AG04449 (cell line): ENCODE measurements at regions of chr17 and their contacts with region 1.

Region 1: DNA sequence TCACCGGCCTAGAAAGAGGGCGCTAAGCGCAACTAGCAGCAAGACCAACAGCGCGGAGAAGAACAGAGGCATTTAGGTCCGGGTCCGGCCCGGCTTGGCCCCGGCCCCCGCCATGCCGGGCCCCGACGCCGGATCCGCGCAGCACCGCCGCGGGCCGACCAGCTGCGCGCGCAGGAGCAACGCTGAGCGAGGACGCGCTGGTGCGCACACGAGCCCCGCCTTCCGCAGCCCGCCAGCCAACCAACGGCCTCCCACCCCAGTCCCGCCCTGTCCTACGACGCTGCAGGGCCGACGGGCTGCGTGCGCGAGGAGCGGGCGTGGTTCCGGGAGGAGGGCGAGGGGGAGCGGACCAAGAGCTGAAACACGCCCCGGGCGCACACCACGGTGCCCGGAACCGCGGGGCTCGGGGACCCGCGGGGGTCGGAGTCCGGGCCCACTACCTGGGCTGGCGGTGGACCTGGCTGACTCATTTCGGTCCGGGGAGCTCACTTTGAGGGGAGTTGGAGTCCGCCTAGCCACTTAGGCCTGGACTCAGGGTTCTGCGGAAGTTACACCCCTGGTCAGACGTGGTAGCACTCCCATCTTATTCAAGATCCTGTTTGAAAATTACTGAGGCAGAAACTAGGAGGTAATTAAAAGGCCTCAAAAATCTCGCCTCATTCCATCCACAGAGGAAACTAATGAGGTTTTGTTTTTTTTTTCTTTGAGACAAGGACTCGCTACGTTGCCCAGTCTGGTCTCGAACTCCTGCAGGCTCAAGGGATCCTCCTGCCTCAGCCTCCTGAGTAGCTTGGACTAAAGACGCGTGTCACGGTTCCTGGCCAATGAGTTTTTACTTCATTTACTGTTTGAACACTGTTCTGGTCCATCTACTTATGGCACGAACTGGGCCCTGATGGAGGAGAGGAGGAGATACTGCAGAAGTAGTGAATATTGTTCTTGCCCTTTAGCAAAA is at the start of gene BLTP2:
- DNase-seq: peak; percentile 50
- H3K4me3 ChIP-seq: peak within 1 kb of the TSS; percentile 93
- CTCF ChIP-seq: no peak

Region 2: DNA sequence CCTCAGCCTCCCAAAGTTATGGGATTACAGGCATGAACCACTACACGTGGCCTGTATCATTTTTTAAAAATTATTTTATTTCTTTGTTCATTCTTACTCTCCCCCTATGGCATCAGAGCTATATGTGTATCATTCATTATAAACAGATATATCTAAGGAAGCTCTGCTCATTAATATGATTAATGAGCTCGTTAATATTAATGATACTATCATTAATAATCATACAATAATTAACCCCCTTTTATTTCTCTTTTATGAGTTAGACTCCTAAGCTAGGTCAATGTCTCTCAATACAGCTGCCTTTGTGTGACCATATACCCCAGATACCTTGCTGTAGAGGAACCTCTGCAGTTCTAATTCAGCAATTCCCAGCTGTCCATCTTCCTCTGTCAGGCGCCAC is 26.8 kb before region 1 on chr17:
- CTCF ChIA-PET with region 1: interaction called, 37 read pairs
- POLR2A ChIA-PET with region 1: no interaction called
- DNase-seq: no peak
- H3K4me3 ChIP-seq: no peak overlapping the region
- CTCF ChIP-seq: no peak

Region 3: DNA sequence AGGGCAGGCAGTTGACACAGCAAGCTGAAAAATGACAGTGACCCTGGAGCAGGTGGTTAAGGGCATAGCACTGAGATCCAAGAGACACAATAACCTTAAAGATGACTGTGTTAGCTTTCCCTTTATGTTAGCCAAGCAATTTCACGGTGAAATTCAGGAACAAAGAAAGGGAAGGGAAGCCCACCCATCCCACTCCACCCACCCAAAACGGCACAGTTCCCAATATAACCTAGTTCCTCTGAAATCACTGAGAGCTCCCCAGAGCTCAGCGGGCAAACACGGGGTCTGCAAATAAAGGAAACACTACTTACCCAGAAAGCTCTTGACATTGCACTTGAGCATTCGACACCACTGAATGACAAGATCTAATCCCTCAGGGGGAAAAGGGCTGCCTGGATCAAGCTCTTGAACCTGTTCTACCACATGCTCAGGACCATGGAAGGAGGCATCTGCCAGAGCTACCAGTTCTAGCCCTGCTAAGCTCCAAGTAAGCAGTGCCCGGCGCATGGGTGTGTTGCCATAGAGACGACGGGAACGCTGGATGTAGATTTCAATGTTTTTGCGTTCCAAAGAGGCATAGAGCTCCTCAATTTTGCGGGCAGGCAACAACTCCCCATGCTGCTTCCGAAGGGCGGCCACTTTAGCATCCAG is 10.9 kb before region 1 on chr17:
- CTCF ChIA-PET with region 1: interaction called, 85 read pairs
- POLR2A ChIA-PET with region 1: interaction called, 5 read pairs
- DNase-seq: no peak
- H3K4me3 ChIP-seq: no peak overlapping the region
- CTCF ChIP-seq: no peak

Region 4: DNA sequence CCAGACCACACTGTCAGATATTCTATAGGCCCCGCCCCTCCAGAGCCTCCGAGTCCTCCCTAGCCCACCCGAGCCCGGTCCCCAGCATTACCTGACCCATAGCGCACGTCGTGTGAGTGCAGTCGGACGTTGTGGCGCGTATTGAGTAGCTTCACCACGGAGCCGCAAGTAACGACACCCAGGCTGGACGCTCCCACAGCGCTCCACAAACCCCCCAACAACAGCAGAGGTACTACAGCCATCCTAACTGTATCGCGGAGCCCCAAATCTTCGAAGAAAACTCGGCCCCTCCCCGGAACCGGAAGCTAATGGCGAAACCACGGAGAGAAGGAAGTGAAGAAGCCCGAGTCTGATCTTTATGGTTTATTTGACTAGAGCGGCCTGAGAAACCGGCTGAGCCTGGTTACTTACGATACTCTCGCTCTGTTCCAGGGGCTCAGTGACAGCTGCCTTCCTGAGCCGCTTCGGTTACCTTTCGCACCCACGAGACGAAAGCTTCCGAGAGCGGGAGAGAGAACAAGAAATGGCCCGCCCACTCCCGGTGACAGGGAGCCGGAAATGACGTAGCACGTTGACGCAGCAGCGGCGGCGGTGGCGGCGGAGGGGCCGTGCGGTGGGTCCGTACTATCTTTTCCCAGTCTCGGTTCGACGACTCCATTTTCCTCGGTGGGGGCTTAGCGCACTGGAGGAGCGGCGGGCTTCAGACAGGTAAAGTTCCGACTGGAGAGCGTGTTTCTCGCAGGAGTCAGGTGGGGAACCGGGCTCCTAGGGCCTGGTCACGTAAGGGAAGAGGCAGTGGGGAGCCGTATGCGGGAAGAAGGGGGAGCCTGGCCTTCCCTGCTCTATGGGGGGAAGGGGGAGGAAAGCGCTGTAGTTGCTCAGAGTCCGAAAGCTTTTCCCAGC is 16.6 kb after region 1 on chr17 and contains the starts of genes SDF2 and SUPT6H:
- CTCF ChIA-PET with region 1: interaction called, 63 read pairs
- POLR2A ChIA-PET with region 1: interaction called, 4 read pairs
- DNase-seq: no peak
- H3K4me3 ChIP-seq: peak within 1 kb of the TSS; percentile 99
- CTCF ChIP-seq: no peak